Breast epithelium (tissue), 4 donors: ENCODE measurements at regions of chr18 and their contacts with region 1.

Region 1: GRCh38 chr18:46660955-46661749 is 4.1 kb upstream of the LOXHD1 start:
- DNase-seq: no peak
- H3K4me3 ChIP-seq: no peak overlapping the region
- H3K27ac ChIP-seq: no peak overlapping the region
- H3K4me1 ChIP-seq: no peaks in the 10 kb centered on the region
- H3K27me3 ChIP-seq: no peaks in the 10 kb centered on the region
- CTCF ChIP-seq: no peak
- POLR2A ChIP-seq: no peak

Region 2: GRCh38 chr18:44750774-44751173 is 1910.4 kb before region 1 on chr18:
- intact Hi-C with region 1: no loop called
- DNase-seq: no peak
- H3K4me3 ChIP-seq: no peak overlapping the region
- H3K27ac ChIP-seq: no peak overlapping the region
- H3K4me1 ChIP-seq: peaks cover 0 to 2% of the 10 kb centered on the region in 2 donors
- H3K27me3 ChIP-seq: no peaks in the 10 kb centered on the region
- CTCF ChIP-seq: no peak
- POLR2A ChIP-seq: no peak

Region 3: DNA sequence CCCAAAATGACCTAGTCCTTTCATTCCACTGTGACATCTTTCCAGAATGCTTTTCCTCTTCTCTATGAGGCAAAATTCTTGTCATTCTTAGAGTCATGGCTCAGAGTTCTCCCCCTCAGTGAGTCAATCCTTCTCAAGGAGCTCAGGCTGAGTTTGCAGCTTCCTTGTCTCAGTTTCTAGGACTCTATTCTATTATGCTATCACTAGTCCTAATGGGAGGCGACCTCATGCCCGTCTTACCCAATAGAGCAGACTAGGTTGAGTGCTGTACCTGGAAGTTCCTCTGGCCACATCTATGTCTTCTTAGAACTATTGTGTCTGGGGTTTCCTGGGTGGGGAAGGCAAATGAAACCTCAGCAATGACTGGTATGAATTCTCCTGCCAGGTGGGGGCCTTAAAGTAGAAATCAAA is 505.5 kb before region 1 on chr18:
- intact Hi-C with region 1: loop called (anchors 10 kb)
- DNase-seq: no peak
- H3K4me3 ChIP-seq: no peak overlapping the region
- H3K27ac ChIP-seq: no peak overlapping the region
- H3K4me1 ChIP-seq: no peaks in the 10 kb centered on the region
- H3K27me3 ChIP-seq: no peaks in the 10 kb centered on the region
- CTCF ChIP-seq: no peak
- POLR2A ChIP-seq: no peak

Region 4: GRCh38 chr18:46706968-46707367 is 45.8 kb after region 1 on chr18:
- intact Hi-C with region 1: no loop called
- DNase-seq: no peak
- H3K4me3 ChIP-seq: no peak overlapping the region
- H3K27ac ChIP-seq: no peak overlapping the region
- H3K4me1 ChIP-seq: no peaks in the 10 kb centered on the region
- H3K27me3 ChIP-seq: no peaks in the 10 kb centered on the region
- CTCF ChIP-seq: no peak
- POLR2A ChIP-seq: no peak